Activated T-helper 1 cell treated with anti-CD3 and anti-CD28 coated beads, Interleukin-12 subunit alpha, Interleukin-12 subunit beta, Interleukin-2, Interleukin-4 antibody, amounts not matched to agents 30 ng/mL and 10 ng/mL and 1 ng/mL, durations not matched to agents 14 hours and 24 hours and 36 hours (primary cell): ENCODE measurements at regions of chr13 and their contacts with region 1.

Region 1: GRCh38 chr13:102845630-102846260 is at the start of gene ERCC5:
- DNase-seq: peak; percentile 94
- H3K4me3 Mint-ChIP-seq: peak within 1 kb of the TSS; percentile 95
- H3K27ac Mint-ChIP-seq: peak within 1 kb of the TSS; percentile 99
- H3K4me1 Mint-ChIP-seq: peaks cover 51% of the 10 kb centered on the region
- H3K27me3 Mint-ChIP-seq: no peaks in the 10 kb centered on the region
- total RNA-seq, gene ERCC5: 40.3 and 42.4 TPM in 2 replicates

Region 2: GRCh38 chr13:101626925-101627555 is 1218.7 kb before region 1 on chr13:
- intact Hi-C with region 1: loop called (anchors 5 kb)
- DNase-seq: no peak
- H3K4me3 Mint-ChIP-seq: no peak overlapping the region
- H3K27ac Mint-ChIP-seq: peak overlapping the region; percentile 69
- H3K4me1 Mint-ChIP-seq: peaks cover 40% of the 10 kb centered on the region
- H3K27me3 Mint-ChIP-seq: peaks cover 19% of the 10 kb centered on the region

Region 3: GRCh38 chr13:102596147-102597028 is 249.4 kb before region 1 on chr13 and contains the start of gene TPP2:
- intact Hi-C with region 1: loop called (anchors 1 kb)
- DNase-seq: peak; percentile 98
- H3K4me3 Mint-ChIP-seq: peak within 1 kb of the TSS; percentile 95
- H3K27ac Mint-ChIP-seq: peak within 1 kb of the TSS; percentile 97
- H3K4me1 Mint-ChIP-seq: peaks cover 72% of the 10 kb centered on the region
- H3K27me3 Mint-ChIP-seq: no peaks in the 10 kb centered on the region
- total RNA-seq, gene TPP2: 77.0 and 78.9 TPM in 2 replicates

Region 4: GRCh38 chr13:102680842-102681740 is 164.7 kb before region 1 on chr13:
- intact Hi-C with region 1: loop called (anchors 5 kb)
- DNase-seq: no peak
- H3K4me3 Mint-ChIP-seq: peak overlapping the region; percentile 35
- H3K27ac Mint-ChIP-seq: peak overlapping the region; percentile 54
- H3K4me1 Mint-ChIP-seq: peaks cover 41% of the 10 kb centered on the region
- H3K27me3 Mint-ChIP-seq: no peaks in the 10 kb centered on the region

Region 5: DNA sequence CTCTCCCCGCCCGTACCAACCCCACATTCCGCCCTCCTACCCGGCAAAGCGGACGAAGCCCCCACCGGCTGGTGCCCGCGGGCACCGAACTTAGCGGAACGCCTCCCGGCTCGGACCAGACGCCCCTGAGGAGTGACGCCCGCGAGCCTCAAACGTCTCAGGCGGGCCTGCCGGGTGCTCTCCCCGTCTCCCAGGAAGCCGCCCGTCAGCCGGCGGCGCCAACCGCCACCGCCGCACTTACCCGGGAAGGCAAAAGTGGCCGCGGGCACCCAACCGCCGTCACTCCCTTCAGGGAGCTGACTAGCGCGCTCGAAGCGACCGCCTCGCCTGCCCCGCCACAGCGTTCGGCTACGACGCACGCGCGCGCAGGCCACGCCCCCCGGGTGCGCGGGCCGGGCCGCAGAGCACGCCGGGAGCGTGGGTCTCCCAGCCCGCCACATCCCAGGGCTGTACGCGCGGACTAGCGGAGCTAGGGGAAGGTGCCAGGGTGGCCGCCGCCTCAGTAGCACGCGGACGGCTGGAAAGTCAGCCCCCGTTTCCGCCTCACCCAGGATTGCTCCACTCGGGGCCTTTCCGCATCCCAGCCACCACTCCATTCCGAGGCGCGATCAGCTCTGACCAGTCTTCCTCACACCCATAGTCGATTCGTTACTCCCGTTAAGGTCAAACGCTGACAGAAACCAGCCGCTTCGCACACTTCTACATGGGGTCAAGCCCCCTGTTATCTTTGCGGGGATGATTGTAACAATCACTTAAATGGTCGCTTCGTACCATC is 72.1 kb before region 1 on chr13 and contains the start of gene TEX30:
- intact Hi-C with region 1: loop called (anchors 1 kb)
- DNase-seq: peak; percentile 89
- H3K4me3 Mint-ChIP-seq: peak within 1 kb of the TSS; percentile 95
- H3K27ac Mint-ChIP-seq: peak within 1 kb of the TSS; percentile 95
- H3K4me1 Mint-ChIP-seq: peaks cover 66% of the 10 kb centered on the region
- H3K27me3 Mint-ChIP-seq: no peaks in the 10 kb centered on the region
- total RNA-seq, gene TEX30: 60.2 and 66.0 TPM in 2 replicates

Region 6: GRCh38 chr13:102800145-102801041 is 45.4 kb before region 1 on chr13:
- intact Hi-C with region 1: loop called (anchors 1 kb)
- DNase-seq: peak; percentile 83
- H3K4me3 Mint-ChIP-seq: peak overlapping the region; percentile 97
- H3K27ac Mint-ChIP-seq: peak overlapping the region; percentile 91
- H3K4me1 Mint-ChIP-seq: peaks cover 43% of the 10 kb centered on the region
- H3K27me3 Mint-ChIP-seq: no peaks in the 10 kb centered on the region

Region 7: DNA sequence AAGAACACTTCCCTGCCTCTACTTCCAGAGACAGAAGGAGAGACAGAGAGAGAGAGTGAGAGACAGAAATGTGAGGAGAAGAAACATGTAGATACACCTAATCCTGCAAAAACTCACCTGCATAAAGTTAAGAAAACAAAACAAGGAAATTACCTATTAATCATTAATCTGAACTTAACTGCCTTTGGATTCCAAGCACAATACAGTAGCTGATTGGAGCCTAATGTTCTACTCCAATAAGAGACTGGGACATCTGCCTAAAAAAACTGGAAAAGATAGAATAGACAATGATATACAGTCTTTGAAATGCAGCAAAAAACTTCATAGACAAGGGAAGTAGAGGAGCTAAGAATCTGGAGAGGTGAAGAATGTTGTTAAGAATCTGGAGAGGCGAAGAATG is 1130.6 kb after region 1 on chr13:
- intact Hi-C with region 1: no loop called
- DNase-seq: no peak
- H3K4me3 Mint-ChIP-seq: no peak overlapping the region
- H3K27ac Mint-ChIP-seq: no peak overlapping the region
- H3K4me1 Mint-ChIP-seq: no peaks in the 10 kb centered on the region
- H3K27me3 Mint-ChIP-seq: no peaks in the 10 kb centered on the region